Endothelial cell of umbilical vein (primary cell): ENCODE measurements at regions of chr20 and their contacts with region 1.

Region 1: GRCh38 chr20:5100684-5101347 is 18.9 kb downstream of the PCNA start:
- DNase-seq: peak; percentile 74
- H3K4me3 ChIP-seq: no peak overlapping the region
- H3K27ac ChIP-seq: no peak overlapping the region
- H3K4me1 ChIP-seq: no peaks in the 10 kb centered on the region
- H3K27me3 ChIP-seq: no peaks in the 10 kb centered on the region
- CTCF ChIP-seq: peak; percentile 73 to 76
- POLR2A ChIP-seq: no peak

Region 2: GRCh38 chr20:4740774-4741431 is 359.9 kb before region 1 on chr20:
- CTCF ChIA-PET with region 1: interaction called, 11 read pairs
- POLR2A ChIA-PET with region 1: no interaction called
- dilution Hi-C with region 1: no loop called
- intact Hi-C with region 1: loop called (anchors 5 kb)
- DNase-seq: peak; percentile 52
- H3K4me3 ChIP-seq: no peak overlapping the region
- H3K27ac ChIP-seq: no peak overlapping the region
- H3K4me1 ChIP-seq: no peaks in the 10 kb centered on the region
- H3K27me3 ChIP-seq: peaks cover 11 to 14% of the 10 kb centered on the region in 2 experiments
- CTCF ChIP-seq: peak; percentile 78 to 81
- POLR2A ChIP-seq: no peak

Region 3: DNA sequence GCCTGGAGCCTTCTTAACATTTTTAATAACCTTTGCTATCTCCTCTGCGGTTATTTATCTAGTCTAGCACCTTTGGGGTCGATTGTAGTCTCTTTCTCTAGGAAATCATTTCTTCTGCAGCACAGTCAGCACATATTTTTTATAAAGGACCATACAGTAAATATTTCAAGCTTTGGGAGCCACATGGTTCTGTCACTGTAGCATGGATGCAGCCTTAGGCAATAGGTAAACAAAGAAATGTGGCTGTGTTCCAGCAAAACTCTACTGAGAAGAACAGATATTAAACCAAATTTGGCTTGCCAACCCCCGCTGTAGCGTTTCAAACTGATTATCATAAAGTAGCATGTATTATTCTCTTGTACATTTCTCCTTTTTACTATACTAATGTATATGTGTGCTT is 195.2 kb before region 1 on chr20:
- CTCF ChIA-PET with region 1: no interaction called
- POLR2A ChIA-PET with region 1: no interaction called
- dilution Hi-C with region 1: no loop called
- intact Hi-C with region 1: no loop called
- DNase-seq: no peak
- H3K4me3 ChIP-seq: no peak overlapping the region
- H3K27ac ChIP-seq: no peak overlapping the region
- H3K4me1 ChIP-seq: no peaks in the 10 kb centered on the region
- H3K27me3 ChIP-seq: no peaks in the 10 kb centered on the region
- CTCF ChIP-seq: no peak
- POLR2A ChIP-seq: no peak

Region 4: GRCh38 chr20:4956200-4956810 is 144.5 kb before region 1 on chr20:
- CTCF ChIA-PET with region 1: interaction called, 48 read pairs
- POLR2A ChIA-PET with region 1: no interaction called
- dilution Hi-C with region 1: no loop called
- intact Hi-C with region 1: loop called (anchors 2 kb)
- DNase-seq: peak; percentile 79
- H3K4me3 ChIP-seq: no peak overlapping the region
- H3K27ac ChIP-seq: no peak overlapping the region
- H3K4me1 ChIP-seq: peaks cover 3% of the 10 kb centered on the region
- H3K27me3 ChIP-seq: no peaks in the 10 kb centered on the region
- CTCF ChIP-seq: peak; percentile 45 to 68
- POLR2A ChIP-seq: no peak

Region 5: GRCh38 chr20:5001174-5002076 is 99.4 kb before region 1 on chr20 and contains the start of gene SLC23A2:
- CTCF ChIA-PET with region 1: interaction called, 9 read pairs
- POLR2A ChIA-PET with region 1: no interaction called
- dilution Hi-C with region 1: no loop called
- intact Hi-C with region 1: loop called (anchors 2 kb)
- DNase-seq: peak; percentile 17
- H3K4me3 ChIP-seq: peak within 1 kb of the TSS; percentile 70 to 78 (median 70)
- H3K27ac ChIP-seq: no peak within 1 kb of the TSS
- H3K4me1 ChIP-seq: peaks cover 13% of the 10 kb centered on the region
- H3K27me3 ChIP-seq: no peaks in the 10 kb centered on the region
- CTCF ChIP-seq: no peak
- POLR2A ChIP-seq: peak; percentile 21
- total RNA-seq, gene SLC23A2: 23.3 and 24.4 TPM in 2 replicates

Region 6: DNA sequence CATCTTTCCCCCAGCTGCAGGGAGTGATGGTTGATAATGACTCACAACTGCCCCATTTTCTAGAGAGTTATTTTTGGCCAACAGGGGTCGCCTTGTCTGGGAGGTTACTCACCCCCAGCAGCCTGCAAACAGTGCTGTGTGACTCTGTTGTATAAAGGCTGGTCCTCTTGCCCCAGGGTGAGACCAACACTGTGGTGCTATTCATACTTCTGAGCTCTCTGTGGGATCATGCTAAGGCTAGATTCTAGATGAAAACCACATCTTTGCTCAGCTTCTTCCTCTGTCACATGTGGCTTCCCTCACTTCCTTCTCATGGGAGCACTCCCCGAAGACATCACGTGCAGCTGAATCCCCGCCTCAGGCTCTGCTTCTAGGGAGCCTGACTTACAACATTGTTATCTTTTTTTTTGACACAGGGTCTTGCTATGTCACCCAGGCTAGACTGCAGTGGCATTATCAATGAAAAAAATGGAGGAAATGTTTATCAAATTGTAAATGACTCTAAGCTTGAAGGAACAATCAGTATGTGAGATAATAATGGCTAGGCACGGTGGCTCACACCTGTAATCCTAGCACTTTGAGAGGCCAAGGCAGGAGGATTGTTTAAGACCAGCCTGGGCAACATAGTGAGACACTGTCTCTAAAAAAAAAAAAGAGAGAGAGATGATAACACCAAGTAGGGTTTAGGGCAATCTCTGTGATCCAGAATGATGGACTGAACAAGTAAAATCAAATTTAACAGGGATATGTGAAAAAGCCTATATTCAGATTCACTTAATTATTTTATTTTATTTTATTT is 43.8 kb before region 1 on chr20:
- CTCF ChIA-PET with region 1: interaction called, 63 read pairs
- POLR2A ChIA-PET with region 1: no interaction called
- dilution Hi-C with region 1: no loop called
- intact Hi-C with region 1: loop called (anchors 1 kb)
- DNase-seq: peak; percentile 23
- H3K4me3 ChIP-seq: no peak overlapping the region
- H3K27ac ChIP-seq: no peak overlapping the region
- H3K4me1 ChIP-seq: peaks cover 6% of the 10 kb centered on the region
- H3K27me3 ChIP-seq: no peaks in the 10 kb centered on the region
- CTCF ChIP-seq: peak; percentile 43 to 47
- POLR2A ChIP-seq: no peak

Region 7: GRCh38 chr20:5191829-5192569 is 91.2 kb after region 1 on chr20:
- CTCF ChIA-PET with region 1: interaction called, 28 read pairs
- POLR2A ChIA-PET with region 1: no interaction called
- dilution Hi-C with region 1: no loop called
- intact Hi-C with region 1: no loop called
- DNase-seq: peak; percentile 79
- H3K4me3 ChIP-seq: no peak overlapping the region
- H3K27ac ChIP-seq: no peak overlapping the region
- H3K4me1 ChIP-seq: peaks cover 3% of the 10 kb centered on the region
- H3K27me3 ChIP-seq: no peaks in the 10 kb centered on the region
- CTCF ChIP-seq: peak; percentile 59 to 64
- POLR2A ChIP-seq: no peak